B cell (primary cell): ENCODE measurements at regions of chr7 and their contacts with region 1.

Region 1: DNA sequence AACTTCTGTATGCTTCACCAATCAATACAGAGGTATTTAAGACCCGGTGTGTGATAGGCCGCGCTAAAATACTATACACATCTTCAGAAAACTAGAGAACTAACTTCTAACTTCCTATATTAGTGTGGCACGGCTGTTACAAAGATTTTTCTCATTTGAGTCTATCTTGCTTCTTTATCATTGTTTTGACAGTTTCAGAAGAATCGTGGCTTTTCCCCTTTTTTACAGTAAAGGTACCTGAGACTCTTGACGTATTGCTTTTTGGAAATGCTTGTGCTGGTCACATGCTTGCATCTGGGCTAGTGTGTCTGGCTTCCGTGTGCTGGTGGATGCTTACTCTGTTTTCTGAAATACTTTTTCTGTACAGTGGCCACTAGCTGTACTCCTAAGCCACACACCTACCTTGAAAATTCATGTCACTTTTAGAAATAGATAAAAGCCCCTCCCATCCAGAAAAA is 12.7 kb downstream of the IKZF1 start:
- DNase-seq: peak; percentile 86
- ATAC-seq: peak; percentile 74
- H3K4me3 ChIP-seq: peak overlapping the region in 1 of 5 experiments; percentile 37
- H3K4me3 Mint-ChIP-seq: peak overlapping the region; percentile 73
- H3K27ac ChIP-seq: peak overlapping the region; percentile 54 to 83
- H3K27ac Mint-ChIP-seq: peak overlapping the region; percentile 96
- H3K4me1 ChIP-seq: peaks cover 81 to 86% of the 10 kb centered on the region in 2 donors
- H3K4me1 Mint-ChIP-seq: peaks cover 93% of the 10 kb centered on the region
- H3K27me3 ChIP-seq: no peaks in the 10 kb centered on the region
- H3K27me3 Mint-ChIP-seq: no peaks in the 10 kb centered on the region
- CTCF ChIP-seq: peak; percentile 32

Region 2: DNA sequence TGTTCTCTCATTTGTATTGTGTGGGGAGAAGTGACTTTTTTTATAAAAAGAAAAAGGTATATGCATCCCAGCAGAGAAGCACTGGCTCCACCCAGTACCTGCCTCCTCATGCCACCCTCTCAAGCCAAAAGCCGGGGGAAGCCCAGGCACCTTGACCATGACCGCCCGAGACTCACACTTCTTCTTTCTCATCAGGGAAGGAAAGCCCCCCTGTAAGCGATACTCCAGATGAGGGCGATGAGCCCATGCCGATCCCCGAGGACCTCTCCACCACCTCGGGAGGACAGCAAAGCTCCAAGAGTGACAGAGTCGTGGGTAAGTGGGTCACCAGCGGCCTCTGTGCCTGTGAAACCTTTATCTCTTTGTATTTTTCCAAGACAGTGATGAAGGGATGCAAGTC is 10.2 kb after region 1 on chr7:
- CTCF ChIA-PET with region 1: interaction called, 17 read pairs
- POLR2A ChIA-PET with region 1: interaction called, 4 read pairs
- intact Hi-C with region 1: loop called (anchors 1 kb)
- DNase-seq: peak; percentile 78
- ATAC-seq: peak; percentile 46
- H3K4me3 ChIP-seq: no peak overlapping the region
- H3K4me3 Mint-ChIP-seq: peak overlapping the region; percentile 44
- H3K27ac ChIP-seq: peak overlapping the region; percentile 59 to 95
- H3K27ac Mint-ChIP-seq: peak overlapping the region; percentile 90
- H3K4me1 ChIP-seq: peaks cover 68 to 74% of the 10 kb centered on the region in 2 donors
- H3K4me1 Mint-ChIP-seq: peaks cover 49% of the 10 kb centered on the region
- H3K27me3 ChIP-seq: no peaks in the 10 kb centered on the region
- H3K27me3 Mint-ChIP-seq: no peaks in the 10 kb centered on the region
- CTCF ChIP-seq: no peak